Activated CD4-positive, alpha-beta T cell treated with anti-CD3 and anti-CD28 coated beads, Interleukin-2, amount 10 ng/mL, durations not matched to agents 24 days and 14 days (primary cell): ENCODE measurements at regions of chr16 and their contacts with region 1.

Region 1: GRCh38 chr16:2911580-2912329 is at the start of gene FLYWCH1:
- DNase-seq: peak; percentile 100
- H3K4me3 Mint-ChIP-seq: peak within 1 kb of the TSS; percentile 95
- H3K27ac Mint-ChIP-seq: peak within 1 kb of the TSS; percentile 88
- H3K4me1 Mint-ChIP-seq: peaks cover 22% of the 10 kb centered on the region
- H3K27me3 Mint-ChIP-seq: peaks cover 5% of the 10 kb centered on the region
- total RNA-seq, gene FLYWCH1: 63.9 and 64.5 TPM in 2 replicates

Region 2: GRCh38 chr16:2926650-2927646 is 15.2 kb after region 1 on chr16:
- intact Hi-C with region 1: loop called (anchors 2 kb)
- DNase-seq: peak; percentile 97
- H3K4me3 Mint-ChIP-seq: no peak overlapping the region
- H3K27ac Mint-ChIP-seq: no peak overlapping the region
- H3K4me1 Mint-ChIP-seq: peaks cover 16% of the 10 kb centered on the region
- H3K27me3 Mint-ChIP-seq: no peaks in the 10 kb centered on the region

Region 3: DNA sequence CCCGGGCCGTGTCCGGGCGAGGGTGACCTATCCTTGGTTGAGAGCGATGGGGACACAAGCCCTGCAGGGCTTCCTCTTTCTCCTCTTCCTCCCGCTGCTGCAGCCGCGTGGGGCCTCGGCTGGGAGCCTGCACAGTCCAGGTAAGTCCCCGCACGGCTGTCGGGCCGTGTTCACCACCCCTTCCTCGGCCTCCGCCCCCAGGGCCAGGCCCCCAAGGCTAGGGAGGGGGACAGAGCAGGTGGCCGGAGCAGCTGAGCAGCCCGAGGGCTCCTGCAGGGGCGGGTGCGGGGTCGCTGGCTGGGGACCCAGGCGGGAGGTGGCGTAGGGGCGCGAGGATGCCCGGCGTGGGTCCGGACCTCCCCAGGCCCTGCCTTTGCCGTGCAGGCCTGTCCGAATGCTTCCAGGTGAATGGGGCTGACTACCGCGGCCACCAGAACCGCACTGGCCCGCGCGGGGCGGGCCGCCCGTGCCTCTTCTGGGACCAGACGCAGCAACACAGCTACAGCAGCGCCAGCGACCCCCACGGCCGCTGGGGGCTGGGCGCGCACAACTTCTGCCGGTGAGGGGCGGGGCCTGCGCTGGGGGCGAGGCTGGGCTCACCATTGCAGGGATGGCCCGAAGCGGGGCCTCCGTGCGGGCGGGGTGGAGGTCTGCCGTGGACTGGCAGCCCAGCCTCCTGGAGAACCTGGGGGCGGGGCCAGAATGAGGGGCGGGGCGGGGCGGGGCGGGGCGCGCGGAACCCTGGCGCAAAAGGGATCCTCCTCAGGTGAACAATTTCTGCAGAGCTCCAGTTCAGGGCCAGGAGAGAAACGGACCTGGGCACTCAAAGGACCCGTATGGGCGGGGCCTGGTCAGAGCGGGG is 53.0 kb after region 1 on chr16:
- intact Hi-C with region 1: loop called (anchors 5 kb)
- DNase-seq: peak; percentile 92
- H3K4me3 Mint-ChIP-seq: peak overlapping the region; percentile 83
- H3K27ac Mint-ChIP-seq: no peak overlapping the region
- H3K4me1 Mint-ChIP-seq: peaks cover 17% of the 10 kb centered on the region
- H3K27me3 Mint-ChIP-seq: peaks cover 31% of the 10 kb centered on the region